ENCODE measurements at regions of chr17 and their contacts with region 1.

Region 1: GRCh38 chr17:16504984-16505383 is 13.0 kb upstream of the LRRC75A start:
- DNase-seq: no peak
- ATAC-seq: no peak

Region 2: GRCh38 chr17:16463358-16464302 is 41.4 kb before region 1 on chr17:
- intact Hi-C with region 1: loop called (anchors 5 kb)
- DNase-seq: no peak
- ATAC-seq: peak; percentile 77